ENCODE measurements at regions of chr1 and their contacts with region 1.

Region 1: DNA sequence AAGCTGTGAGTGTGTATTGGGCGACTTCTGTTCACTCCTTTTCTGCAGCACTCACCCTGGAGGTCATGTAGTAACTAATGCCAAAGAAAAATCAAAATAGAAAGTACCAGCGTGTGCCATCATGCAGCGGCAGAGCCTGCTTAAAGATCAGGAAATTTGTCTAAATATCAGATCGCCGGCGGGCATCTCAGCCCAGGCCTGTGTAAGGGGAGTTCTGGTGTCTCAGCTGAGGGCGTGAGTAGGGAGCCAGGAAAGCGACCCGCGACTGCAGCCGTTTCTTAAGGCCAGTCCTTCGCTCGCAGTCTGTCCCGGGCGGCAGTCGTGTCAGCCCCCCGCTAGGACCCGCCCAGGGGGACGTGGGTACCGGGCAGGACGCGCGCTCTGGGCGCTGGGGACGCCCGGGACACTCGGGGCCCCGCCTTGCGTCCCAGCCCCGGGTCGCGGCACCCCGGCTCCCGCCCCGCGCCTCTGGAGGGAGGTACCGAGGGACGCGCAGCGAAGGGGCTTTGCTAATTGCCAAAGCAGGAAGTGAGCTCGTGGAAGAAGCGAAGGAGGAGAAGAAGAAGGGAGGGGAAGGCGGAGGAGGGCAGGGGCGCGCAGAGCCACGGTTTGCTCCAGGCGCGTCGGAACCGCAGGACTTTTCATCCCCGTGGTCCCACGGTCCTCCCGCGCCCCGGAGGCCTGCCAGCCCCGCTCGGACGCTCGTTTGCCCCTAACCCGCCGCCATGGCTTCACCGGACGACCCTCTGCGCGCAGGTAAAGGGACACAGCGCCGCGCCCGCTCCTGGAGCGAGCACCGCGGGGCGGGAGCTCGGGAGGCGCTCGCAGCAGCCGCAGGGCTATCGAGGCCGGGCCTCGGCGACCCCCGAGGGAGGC is 1.1 kb downstream of the EDARADD start:
- DNase-seq: peak; percentile 16
- ATAC-seq: peak; percentile 33; the same call in 1 of the 2 replicates
- H3K4me3 ChIP-seq: peak overlapping the region; percentile 70
- H3K27ac ChIP-seq: no peak overlapping the region
- H3K4me1 ChIP-seq: no peaks in the 10 kb centered on the region
- H3K27me3 ChIP-seq: peaks cover 24% of the 10 kb centered on the region
- CTCF ChIP-seq: no peak

Region 2: GRCh38 chr1:236120721-236121153 is 274.4 kb before region 1 on chr1:
- CTCF ChIA-PET with region 1: no interaction called
- POLR2A ChIA-PET with region 1: interaction called, 13 read pairs
- intact Hi-C with region 1: no loop called
- DNase-seq: no peak
- ATAC-seq: no peak
- H3K4me3 ChIP-seq: no peak overlapping the region
- H3K27ac ChIP-seq: no peak overlapping the region
- H3K4me1 ChIP-seq: no peaks in the 10 kb centered on the region
- H3K27me3 ChIP-seq: no peaks in the 10 kb centered on the region
- CTCF ChIP-seq: no peak

Region 3: DNA sequence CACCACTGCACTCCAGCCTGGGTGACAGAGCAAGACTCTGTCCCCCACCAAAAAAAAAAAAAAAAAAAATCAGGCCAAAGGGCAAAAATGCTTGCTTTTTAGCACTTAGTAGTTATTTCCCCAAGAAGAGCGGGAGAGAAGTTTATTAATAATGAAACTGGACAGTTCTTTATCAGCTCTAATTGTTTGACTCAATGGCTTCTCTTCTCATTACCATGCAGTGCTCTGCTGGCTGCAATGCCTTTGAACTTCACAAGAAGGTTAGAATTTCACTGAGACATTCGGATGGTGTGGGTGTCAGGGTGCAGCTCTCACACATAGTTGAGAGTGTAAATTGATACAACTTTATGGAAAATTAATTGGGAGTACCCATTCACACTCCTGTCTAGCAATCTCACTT is 62.6 kb after region 1 on chr1:
- CTCF ChIA-PET with region 1: no interaction called
- POLR2A ChIA-PET with region 1: no interaction called
- intact Hi-C with region 1: no loop called
- DNase-seq: no peak
- ATAC-seq: no peak
- H3K4me3 ChIP-seq: no peak overlapping the region
- H3K27ac ChIP-seq: no peak overlapping the region
- H3K4me1 ChIP-seq: no peaks in the 10 kb centered on the region
- H3K27me3 ChIP-seq: peaks cover 7% of the 10 kb centered on the region
- CTCF ChIP-seq: no peak

Region 4: DNA sequence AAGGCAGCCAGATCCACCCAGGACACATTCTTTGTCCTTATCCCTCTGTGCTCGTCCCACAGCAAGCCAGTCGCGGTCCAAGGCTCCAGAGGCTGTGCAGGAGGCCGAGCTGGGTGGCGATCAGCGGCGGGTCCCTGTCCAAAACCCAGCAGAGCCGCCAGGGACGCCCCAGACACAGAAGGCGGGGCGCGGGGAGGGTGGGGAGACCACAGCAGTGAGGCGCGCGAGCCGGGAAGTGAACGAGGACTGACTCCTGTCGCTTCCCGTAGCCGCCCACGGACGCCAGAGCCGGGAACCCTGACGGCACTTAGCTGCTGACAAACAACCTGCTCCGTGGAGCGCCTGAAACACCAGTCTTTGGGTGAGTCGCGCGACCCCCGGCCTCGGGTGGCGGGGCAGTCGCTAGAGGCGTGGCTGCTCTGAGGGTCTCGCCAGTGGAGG is 128.6 kb after region 1 on chr1 and contains the start of gene LGALS8:
- CTCF ChIA-PET with region 1: no interaction called
- POLR2A ChIA-PET with region 1: no interaction called
- intact Hi-C with region 1: no loop called
- DNase-seq: peak; percentile 67
- ATAC-seq: peak; percentile 78
- H3K4me3 ChIP-seq: peak within 1 kb of the TSS; percentile 99
- H3K27ac ChIP-seq: peak within 1 kb of the TSS; percentile 65
- H3K4me1 ChIP-seq: peaks cover 9% of the 10 kb centered on the region
- H3K27me3 ChIP-seq: no peaks in the 10 kb centered on the region
- CTCF ChIP-seq: no peak
- total RNA-seq, gene LGALS8: 45.7 and 47.9 TPM in 2 replicates

Measured in PC-3 (cell line).